CD14-positive monocyte (primary cell): ENCODE measurements at regions of chr11 and their contacts with region 1.

Region 1: DNA sequence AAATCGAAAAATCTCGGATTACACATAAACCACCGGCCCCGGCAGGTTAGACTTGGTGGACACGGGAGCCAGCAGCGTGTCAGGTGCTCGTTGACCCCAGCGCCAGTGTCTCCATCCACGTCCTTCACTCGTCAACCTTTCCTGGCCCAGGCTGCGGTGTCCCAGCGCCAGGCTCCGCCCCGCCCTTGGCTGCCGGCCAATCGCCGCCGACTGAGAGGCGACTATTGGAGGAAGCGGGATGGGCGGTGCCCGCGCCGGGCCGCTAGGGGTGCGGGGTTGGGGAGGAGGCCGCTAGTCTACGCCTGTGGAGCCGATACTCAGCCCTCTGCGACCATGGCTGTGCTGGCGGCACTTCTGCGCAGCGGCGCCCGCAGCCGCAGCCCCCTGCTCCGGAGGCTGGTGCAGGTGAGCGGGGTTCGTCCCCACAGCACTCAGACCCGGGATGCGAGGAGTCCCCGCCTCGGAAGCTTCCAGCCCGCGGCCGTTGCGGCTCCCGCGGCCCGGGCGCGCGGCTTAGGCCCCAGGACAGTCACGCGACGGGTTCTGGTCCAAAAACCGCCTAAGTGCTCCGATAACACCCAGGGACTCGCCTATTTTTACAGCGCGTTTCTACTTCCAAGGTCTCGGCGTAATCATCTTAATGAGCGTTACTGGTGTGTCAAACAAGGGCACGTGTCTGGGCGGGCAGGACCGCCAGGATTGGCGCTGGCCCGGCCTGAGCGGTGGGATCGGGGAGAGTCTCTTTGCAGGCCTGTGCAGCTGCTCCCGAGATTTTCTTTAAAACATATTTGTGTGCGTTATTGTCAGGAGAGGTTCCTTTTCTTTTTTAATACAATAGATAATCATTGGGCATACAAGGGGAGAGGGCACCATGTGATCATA is at the start of gene ACAT1:
- DNase-seq: peak; percentile 87 to 93 (median 91)
- H3K4me3 ChIP-seq: peak within 1 kb of the TSS; percentile 64 to 83 (median 82)
- H3K4me3 Mint-ChIP-seq: peak within 1 kb of the TSS; percentile 94 to 98
- H3K27ac ChIP-seq: peak within 1 kb of the TSS in 1 of 2 donors; percentile 75
- H3K27ac Mint-ChIP-seq: peak within 1 kb of the TSS in 6 of 7 donors; percentile 69 to 86 (median 78)
- H3K4me1 ChIP-seq: peaks cover 26 to 36% of the 10 kb centered on the region in 2 donors
- H3K4me1 Mint-ChIP-seq: peaks cover 33% of the 10 kb centered on the region
- H3K27me3 ChIP-seq: no peaks in the 10 kb centered on the region
- H3K27me3 Mint-ChIP-seq: peaks cover 0 to 1% (median 0%) of the 10 kb centered on the region in 3 donors
- CTCF ChIP-seq: peak; percentile 17
- polyA plus RNA-seq, gene ACAT1: 13.6 to 24.1 (median 22.3) TPM

Region 2: GRCh38 chr11:107928046-107928766 is 193.3 kb before region 1 on chr11 and contains the start of gene RAB39A:
- intact Hi-C with region 1: loop called in 1 of 2 experiments (anchors 2 kb)
- DNase-seq: peak; percentile 96 to 99 (median 98)
- H3K4me3 ChIP-seq: peak within 1 kb of the TSS; percentile 88 to 96 (median 91)
- H3K4me3 Mint-ChIP-seq: peak within 1 kb of the TSS; percentile 96 to 97
- H3K27ac ChIP-seq: peak within 1 kb of the TSS; percentile 83 to 87
- H3K27ac Mint-ChIP-seq: peak within 1 kb of the TSS; percentile 87 to 97 (median 92)
- H3K4me1 ChIP-seq: peaks cover 22 to 31% of the 10 kb centered on the region in 2 donors
- H3K4me1 Mint-ChIP-seq: peaks cover 33% of the 10 kb centered on the region
- H3K27me3 ChIP-seq: no peaks in the 10 kb centered on the region
- H3K27me3 Mint-ChIP-seq: peaks cover 0 to 14% (median 7%) of the 10 kb centered on the region in 3 donors
- CTCF ChIP-seq: no peak
- polyA plus RNA-seq, gene RAB39A: 1.9 to 6.3 (median 3.9) TPM

Region 3: GRCh38 chr11:108008656-108009496 is 112.6 kb before region 1 on chr11 and contains the start of gene CUL5:
- intact Hi-C with region 1: no loop called
- DNase-seq: peak; percentile 86 to 93 (median 91)
- H3K4me3 ChIP-seq: peak within 1 kb of the TSS; percentile 63 to 95 (median 87)
- H3K4me3 Mint-ChIP-seq: peak within 1 kb of the TSS; percentile 94 to 97
- H3K27ac ChIP-seq: peak within 1 kb of the TSS; percentile 97 to 98
- H3K27ac Mint-ChIP-seq: peak within 1 kb of the TSS; percentile 96 to 99 (median 98)
- H3K4me1 ChIP-seq: peaks cover 18 to 33% of the 10 kb centered on the region in 2 donors
- H3K4me1 Mint-ChIP-seq: peaks cover 14% of the 10 kb centered on the region
- H3K27me3 ChIP-seq: no peaks in the 10 kb centered on the region
- H3K27me3 Mint-ChIP-seq: no peaks in the 10 kb centered on the region
- CTCF ChIP-seq: peak; percentile 89
- polyA plus RNA-seq, gene CUL5: 24.7 to 37.8 (median 36.7) TPM

Region 4: GRCh38 chr11:108037636-108038035 is 83.9 kb before region 1 on chr11:
- intact Hi-C with region 1: no loop called
- DNase-seq: no peak
- H3K4me3 ChIP-seq: no peak overlapping the region
- H3K4me3 Mint-ChIP-seq: no peak overlapping the region
- H3K27ac ChIP-seq: no peak overlapping the region
- H3K27ac Mint-ChIP-seq: no peak overlapping the region
- H3K4me1 ChIP-seq: no peaks in the 10 kb centered on the region
- H3K4me1 Mint-ChIP-seq: no peaks in the 10 kb centered on the region
- H3K27me3 ChIP-seq: no peaks in the 10 kb centered on the region
- H3K27me3 Mint-ChIP-seq: no peaks in the 10 kb centered on the region
- CTCF ChIP-seq: no peak

Region 5: DNA sequence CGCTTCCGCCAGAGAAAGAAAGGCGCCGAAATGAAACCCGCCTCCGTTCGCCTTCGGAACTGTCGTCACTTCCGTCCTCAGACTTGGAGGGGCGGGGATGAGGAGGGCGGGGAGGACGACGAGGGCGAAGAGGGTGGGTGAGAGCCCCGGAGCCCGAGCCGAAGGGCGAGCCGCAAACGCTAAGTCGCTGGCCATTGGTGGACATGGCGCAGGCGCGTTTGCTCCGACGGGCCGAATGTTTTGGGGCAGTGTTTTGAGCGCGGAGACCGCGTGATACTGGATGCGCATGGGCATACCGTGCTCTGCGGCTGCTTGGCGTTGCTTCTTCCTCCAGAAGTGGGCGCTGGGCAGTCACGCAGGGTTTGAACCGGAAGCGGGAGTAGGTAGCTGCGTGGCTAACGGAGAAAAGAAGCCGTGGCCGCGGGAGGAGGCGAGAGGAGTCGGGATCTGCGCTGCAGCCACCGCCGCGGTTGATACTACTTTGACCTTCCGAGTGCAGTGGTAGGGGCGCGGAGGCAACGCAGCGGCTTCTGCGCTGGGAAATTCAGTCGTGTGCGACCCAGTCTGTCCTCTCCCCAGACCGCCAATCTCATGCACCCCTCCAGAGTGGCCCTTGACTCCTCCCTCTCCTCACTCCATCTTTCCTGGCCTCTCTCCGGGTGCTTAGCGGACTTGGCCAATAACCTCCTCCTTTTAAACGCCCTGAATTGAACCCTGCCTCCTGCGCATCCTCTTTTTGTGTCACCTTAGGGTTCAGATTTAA is 101.4 kb after region 1 on chr11 and contains the start of gene ATM:
- intact Hi-C with region 1: loop called (anchors 5 to 10 kb)
- DNase-seq: peak; percentile 99 to 100 (median 99)
- H3K4me3 ChIP-seq: peak within 1 kb of the TSS; percentile 72 to 89 (median 86)
- H3K4me3 Mint-ChIP-seq: peak within 1 kb of the TSS in 1 of 2 donors; percentile 98
- H3K27ac ChIP-seq: peak within 1 kb of the TSS; percentile 99
- H3K27ac Mint-ChIP-seq: no peak within 1 kb of the TSS
- H3K4me1 ChIP-seq: peaks cover 49 to 64% of the 10 kb centered on the region in 2 donors
- H3K4me1 Mint-ChIP-seq: peaks cover 43% of the 10 kb centered on the region
- H3K27me3 ChIP-seq: no peaks in the 10 kb centered on the region
- H3K27me3 Mint-ChIP-seq: peaks cover 0 to 3% (median 0%) of the 10 kb centered on the region in 3 donors
- CTCF ChIP-seq: peak; percentile 76
- polyA plus RNA-seq, gene ATM: 13.2 to 56.7 (median 21.4) TPM

Region 6: GRCh38 chr11:108654994-108655631 is 533.6 kb after region 1 on chr11:
- intact Hi-C with region 1: loop called (anchors 10 kb)
- DNase-seq: no peak
- H3K4me3 ChIP-seq: no peak overlapping the region
- H3K4me3 Mint-ChIP-seq: no peak overlapping the region
- H3K27ac ChIP-seq: no peak overlapping the region
- H3K27ac Mint-ChIP-seq: no peak overlapping the region
- H3K4me1 ChIP-seq: no peaks in the 10 kb centered on the region
- H3K4me1 Mint-ChIP-seq: no peaks in the 10 kb centered on the region
- H3K27me3 ChIP-seq: peaks cover 2 to 3% of the 10 kb centered on the region in 2 donors
- H3K27me3 Mint-ChIP-seq: peaks cover 2 to 5% (median 4%) of the 10 kb centered on the region in 3 donors
- CTCF ChIP-seq: peak; percentile 25

Region 7: DNA sequence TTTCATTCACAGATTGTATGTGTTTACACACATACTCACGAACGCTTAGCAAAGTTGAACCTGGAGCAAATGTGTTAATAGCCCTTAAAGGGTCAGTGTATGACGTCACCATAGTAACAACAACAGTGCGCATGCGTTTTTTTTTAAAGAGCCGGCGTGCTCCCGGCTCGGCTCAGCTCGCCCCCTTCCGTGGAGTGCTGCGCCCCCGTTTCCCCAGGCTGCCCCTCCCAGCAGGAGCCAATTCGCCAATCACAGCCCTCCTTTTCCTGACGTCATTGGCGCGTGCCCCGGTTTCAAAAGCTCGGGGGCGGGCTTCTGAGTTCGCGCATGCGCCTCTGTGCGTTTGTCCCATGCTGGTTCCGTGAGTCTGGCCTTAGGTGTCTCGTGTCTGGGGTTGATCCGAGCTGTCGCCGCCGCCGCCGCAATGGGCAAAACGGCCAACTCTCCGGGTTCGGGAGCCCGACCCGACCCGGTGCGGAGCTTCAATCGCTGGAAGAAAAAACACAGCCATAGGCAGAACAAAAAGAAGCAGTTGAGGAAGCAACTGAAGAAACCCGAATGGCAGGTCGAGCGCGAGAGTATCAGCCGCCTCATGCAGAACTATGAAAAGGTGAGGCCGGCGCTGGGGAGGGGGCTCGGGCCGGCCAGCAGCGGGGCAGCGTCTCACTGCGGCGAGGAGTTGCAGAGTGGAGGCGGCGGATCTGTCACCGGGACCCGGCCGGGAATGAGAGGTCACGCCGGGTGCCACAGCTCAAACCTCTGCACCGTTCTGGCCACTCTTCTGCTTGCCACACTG is 543.4 kb after region 1 on chr11 and contains the start of gene DDX10:
- intact Hi-C with region 1: loop called in 1 of 2 experiments (anchors 10 kb)
- DNase-seq: peak; percentile 95 to 98 (median 96)
- H3K4me3 ChIP-seq: peak within 1 kb of the TSS; percentile 61 to 90 (median 74)
- H3K4me3 Mint-ChIP-seq: peak within 1 kb of the TSS; percentile 98 to 100
- H3K27ac ChIP-seq: peak within 1 kb of the TSS; percentile 43 to 84
- H3K27ac Mint-ChIP-seq: peak within 1 kb of the TSS; percentile 96 to 99 (median 97)
- H3K4me1 ChIP-seq: peaks cover 10 to 21% of the 10 kb centered on the region in 2 donors
- H3K4me1 Mint-ChIP-seq: peaks cover 24% of the 10 kb centered on the region
- H3K27me3 ChIP-seq: no peaks in the 10 kb centered on the region
- H3K27me3 Mint-ChIP-seq: peaks cover 0 to 4% (median 0%) of the 10 kb centered on the region in 3 donors
- CTCF ChIP-seq: no peak
- polyA plus RNA-seq, gene DDX10: 5.0 to 6.3 (median 5.3) TPM